ENCODE measurements at regions of chr13 and their contacts with region 1.

Region 1: DNA sequence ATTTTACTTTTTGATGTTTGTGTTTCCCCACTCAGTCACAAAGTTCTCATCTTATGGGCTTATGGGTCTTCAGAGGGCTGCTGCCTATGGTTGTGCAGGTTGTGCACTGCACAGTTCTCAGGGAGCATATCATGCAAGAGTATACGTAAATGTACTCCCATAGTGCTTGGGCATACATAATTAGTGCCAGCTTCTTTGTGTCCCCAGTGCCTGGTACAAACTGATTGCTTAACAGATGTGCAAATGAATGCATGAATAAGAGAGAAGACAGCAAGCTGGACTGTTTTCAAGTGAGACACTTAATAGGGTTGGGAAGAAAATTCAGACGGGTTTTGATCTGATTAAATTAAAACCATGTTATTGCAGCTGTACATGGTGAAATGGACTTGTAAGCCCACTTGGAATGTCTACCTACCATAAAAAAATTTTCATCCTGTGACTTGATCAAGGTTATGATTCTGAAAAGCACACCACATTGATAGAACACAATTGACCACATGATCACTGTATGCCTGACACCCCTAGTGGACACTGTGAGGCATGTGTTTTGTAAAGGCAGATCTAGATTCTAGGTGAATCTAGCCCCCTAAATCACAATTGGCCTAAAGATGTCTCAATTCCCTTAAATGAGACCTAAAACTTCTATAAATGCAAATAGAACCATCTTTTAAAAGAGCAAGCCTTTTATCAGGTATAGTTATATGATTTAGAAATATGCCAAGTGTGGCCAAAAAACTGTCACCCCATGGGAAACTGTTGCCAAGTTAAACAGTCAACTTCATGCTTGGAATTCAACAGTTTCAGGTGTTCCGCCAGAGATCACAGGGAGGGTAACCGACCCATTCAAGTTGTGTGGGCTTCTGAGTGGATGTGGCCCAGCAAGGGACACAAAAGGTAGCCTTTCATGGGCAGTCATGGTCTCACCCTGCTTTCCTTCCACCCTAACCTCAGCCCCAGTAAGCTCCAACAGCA is 27.9 kb downstream of the FAM124A start:
- DNase-seq: no peak

Region 2: DNA sequence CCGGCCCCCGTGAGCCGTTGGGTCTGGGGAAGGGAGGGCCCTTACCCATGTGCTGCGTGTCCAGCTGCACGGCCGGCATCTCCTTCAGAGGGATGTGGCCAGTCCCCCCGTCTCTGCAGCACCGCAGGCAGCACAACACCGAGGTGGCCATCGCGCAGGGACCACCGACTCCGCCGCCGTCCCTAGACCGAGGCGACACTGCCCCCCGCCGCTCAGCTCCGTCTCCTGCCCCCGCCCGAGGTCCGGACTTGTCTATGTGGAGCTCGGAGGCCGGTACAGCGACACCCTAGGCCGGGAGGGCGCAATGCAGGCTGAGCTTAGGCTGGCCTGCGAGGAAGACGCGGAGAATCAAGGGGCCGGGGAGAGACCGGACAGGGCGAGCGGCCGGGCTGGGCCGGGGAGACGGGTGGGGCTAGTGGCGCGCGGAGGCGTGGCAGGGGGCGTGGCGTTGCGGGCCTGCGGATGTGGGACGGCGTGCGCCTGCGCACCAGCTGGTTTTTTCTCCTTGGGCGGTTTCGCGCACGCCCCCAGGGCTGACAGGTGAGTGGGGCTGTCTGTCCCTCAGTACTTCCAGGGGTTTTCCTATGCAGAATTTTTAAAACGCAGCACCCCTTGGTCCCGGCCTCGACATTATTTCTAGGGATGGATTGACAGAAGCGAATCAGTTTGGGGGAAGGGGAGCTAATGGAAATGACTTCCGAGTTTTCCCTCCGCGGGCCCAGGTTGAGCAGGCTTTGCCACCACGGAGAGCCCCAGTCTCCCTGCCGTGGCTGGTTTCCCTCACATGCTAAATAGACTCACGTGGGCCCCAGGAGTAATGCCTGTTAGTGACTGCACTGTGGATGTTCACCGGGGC is 1313.7 kb before region 1 on chr13 and contains the start of gene SPRYD7:
- intact Hi-C with region 1: loop called in 1 of 2 experiments (anchors 10 kb)
- DNase-seq: peak; percentile 100
- total RNA-seq, gene SPRYD7: 9.1 to 10.8 TPM

Region 3: GRCh38 chr13:50766013-50766412 is 484.0 kb before region 1 on chr13:
- intact Hi-C with region 1: no loop called
- DNase-seq: no peak

Region 4: DNA sequence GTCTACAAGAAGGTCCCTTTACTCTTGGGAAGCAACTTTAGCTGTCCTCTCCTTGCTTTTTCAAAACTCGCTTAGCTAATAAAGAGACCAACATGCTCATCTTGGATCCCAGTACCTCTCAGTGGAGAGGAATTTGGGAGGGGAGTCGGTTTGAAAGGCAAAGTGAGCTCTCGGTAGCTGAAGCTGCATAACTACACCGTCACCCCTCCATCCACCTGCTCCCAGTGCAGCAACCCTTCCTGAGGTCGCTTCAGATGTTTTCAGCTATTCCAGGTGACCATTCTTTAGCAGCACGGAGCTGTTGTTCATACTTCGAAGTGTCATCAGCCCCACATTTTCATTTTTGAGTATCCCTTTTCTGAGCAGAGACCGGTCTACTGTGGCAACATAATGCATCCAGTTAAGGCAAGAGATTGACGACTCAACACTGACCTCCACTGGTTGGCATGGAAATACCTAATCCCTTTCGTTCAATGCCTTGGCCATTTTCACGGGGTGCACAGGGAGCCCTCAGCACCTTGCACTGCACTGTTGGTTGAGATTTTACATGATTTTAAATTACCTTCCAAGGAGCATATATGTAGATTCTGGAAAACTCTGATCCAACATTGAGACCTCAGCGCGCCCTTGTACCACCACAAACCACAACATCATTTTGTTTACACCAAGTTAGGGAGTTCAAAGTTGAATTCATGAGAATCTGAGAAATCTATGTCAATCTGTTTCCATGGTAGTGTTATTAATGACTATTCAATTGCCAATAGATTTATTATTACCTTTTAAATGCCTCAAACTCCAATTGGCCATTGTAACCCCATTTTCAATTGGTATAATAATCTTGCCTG is 448.7 kb before region 1 on chr13:
- intact Hi-C with region 1: no loop called
- DNase-seq: no peak

Region 5: DNA sequence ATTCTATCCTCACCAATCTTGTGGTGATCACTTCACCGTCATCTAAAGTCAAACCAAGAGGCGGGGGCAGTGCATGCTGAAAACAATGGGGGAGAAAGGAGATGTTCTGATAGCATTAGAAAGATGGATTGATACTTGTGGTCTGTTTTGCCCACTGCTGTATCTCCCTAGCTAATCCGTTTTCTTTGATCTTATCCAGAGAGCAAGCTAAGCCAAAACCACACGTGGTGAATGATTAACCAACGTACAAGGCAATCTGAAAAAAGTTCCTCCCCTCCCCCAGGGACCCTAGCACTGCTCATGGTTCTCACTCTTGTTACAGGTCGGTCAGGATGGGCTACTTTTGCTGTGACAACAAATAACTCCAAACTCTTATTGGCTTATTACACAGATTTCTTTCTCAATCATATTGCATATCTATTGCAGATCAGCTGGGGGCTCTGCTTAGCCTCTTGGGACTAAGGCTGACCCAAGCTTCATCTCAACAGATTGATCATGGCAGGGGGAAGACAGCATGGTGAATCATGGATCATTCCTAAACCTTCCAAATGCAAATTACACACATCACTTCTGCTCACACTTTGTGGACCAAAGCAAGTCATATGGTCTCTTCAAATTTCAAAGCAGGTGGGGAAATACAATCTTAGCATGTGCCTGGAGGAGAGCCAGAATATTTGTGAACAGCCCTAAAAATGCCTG is 127.0 kb before region 1 on chr13:
- intact Hi-C with region 1: no loop called
- DNase-seq: no peak

Region 6: GRCh38 chr13:51181786-51182383 is 68.2 kb before region 1 on chr13:
- intact Hi-C with region 1: no loop called
- DNase-seq: no peak

Region 7: DNA sequence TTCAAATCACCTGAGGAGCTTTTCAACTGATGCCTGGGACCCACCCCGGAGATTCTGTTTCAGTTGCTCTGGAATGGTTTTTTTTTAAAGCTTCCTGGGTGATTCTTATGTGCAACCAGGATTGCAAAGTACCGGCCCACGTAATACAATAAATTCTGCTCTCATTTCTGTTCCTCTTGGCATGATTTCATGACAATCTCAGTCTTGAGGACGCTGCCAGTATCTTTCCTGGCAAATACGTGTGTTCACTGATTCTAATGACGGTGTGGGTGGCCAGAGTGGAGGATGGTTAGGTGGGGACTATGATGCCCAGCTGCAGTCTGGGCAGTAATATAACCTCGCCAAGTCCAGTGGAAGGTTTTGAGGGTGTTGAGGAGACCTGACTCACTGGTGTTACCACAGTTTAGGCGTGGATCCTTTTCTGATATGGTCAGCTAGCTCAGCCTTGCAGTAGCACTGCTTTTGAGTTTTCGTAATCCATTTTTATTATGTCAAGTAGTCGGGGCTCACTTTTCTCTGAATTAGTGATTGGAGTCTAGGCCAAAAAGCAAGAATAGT is 21.6 kb after region 1 on chr13:
- intact Hi-C with region 1: loop called in 1 of 2 experiments (anchors 1 kb)
- DNase-seq: no peak